ENCODE measurements at regions of chr9 and their contacts with region 1.

Region 1: DNA sequence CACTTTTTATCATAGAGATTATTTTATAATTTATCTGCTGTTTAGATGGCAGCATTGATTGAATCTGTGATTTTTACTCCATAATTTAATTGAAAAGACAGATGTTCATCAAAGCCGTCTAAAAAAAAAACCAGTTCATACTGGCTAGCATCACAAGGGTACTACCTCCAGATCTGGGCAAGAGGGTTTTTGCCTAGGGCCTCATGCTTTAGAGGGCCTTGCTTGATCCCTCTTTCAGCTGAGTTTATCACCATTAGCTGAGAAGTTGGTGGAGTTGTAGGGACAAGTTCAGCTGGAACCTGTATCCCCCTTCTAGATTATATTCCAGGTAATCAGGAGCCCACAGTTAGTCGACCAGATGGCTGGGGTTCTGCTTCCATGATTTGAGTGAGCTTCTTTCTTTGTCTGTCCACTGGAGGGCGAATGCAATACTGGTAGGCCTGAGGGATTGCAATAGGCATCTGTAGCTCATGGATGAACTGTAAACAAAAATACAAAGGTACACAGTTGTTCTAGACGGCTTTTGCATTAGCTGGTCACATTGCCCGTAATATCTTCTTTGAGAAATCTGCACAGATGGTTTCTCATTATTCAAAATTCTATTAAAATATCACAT is 88.8 kb downstream of the PCSK5 start:
- DNase-seq: no peak
- H3K4me3 ChIP-seq: no peak overlapping the region
- H3K27ac ChIP-seq: no peak overlapping the region
- H3K4me1 ChIP-seq: peaks cover 3 to 13% (median 6%) of the 10 kb centered on the region in 4 experiments; a peak in 5 of 7 replicates
- H3K27me3 ChIP-seq: no peaks in the 10 kb centered on the region
- CTCF ChIP-seq: peak; percentile 19 to 55 (median 46)
- EP300 ChIP-seq: no peak
- POLR2A ChIP-seq: no peak
- RAD21 ChIP-seq: peak; percentile 53 to 66

Region 2: DNA sequence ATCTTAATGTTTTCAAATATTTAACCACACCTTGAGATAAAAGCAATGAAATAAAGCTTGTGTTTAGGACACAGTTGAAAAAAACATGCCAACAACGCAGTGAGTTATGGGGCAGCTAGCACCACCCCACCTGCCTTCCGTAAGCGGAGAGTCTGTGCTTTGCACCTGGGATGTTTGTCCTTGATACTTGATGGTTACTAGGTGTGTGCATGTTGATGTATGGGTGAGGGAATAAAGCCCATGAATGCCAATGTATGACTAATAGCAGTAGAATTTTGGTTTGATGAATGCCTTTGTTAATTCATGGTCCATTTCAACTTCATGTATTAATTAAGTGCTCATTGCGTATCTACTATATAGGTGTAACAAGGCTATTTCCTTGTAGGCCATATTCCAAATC is 14.8 kb before region 1 on chr9:
- CTCF ChIA-PET with region 1: interaction called, 10 read pairs
- POLR2A ChIA-PET with region 1: interaction called, 3 read pairs
- DNase-seq: no peak
- H3K4me3 ChIP-seq: no peak overlapping the region
- H3K27ac ChIP-seq: no peak overlapping the region
- H3K4me1 ChIP-seq: peaks cover 0 to 7% (median 2%) of the 10 kb centered on the region in 4 experiments; a peak in 1 of 7 replicates
- H3K27me3 ChIP-seq: no peaks in the 10 kb centered on the region
- CTCF ChIP-seq: no peak
- EP300 ChIP-seq: no peak
- POLR2A ChIP-seq: no peak
- RAD21 ChIP-seq: no peak

Region 3: GRCh38 chr9:76037826-76038225 is 58.6 kb after region 1 on chr9:
- CTCF ChIA-PET with region 1: no interaction called
- POLR2A ChIA-PET with region 1: no interaction called
- DNase-seq: no peak
- H3K4me3 ChIP-seq: no peak overlapping the region
- H3K27ac ChIP-seq: peak overlapping the region; percentile 40; the same call in 1 of the 2 replicates
- H3K4me1 ChIP-seq: peaks cover 0 to 8% (median 7%) of the 10 kb centered on the region in 4 experiments; a peak in 3 of 7 replicates
- H3K27me3 ChIP-seq: no peaks in the 10 kb centered on the region
- CTCF ChIP-seq: no peak
- EP300 ChIP-seq: no peak
- POLR2A ChIP-seq: no peak
- RAD21 ChIP-seq: no peak